Head of caudate nucleus (tissue), 42 donors: ENCODE measurements at regions of chr14 and their contacts with region 1.

Region 1: GRCh38 chr14:24114536-24115450 is at the starts of genes DCAF11 and NRL:
- DNase-seq: peak; percentile 95 to 99 (median 98)

Region 2: GRCh38 chr14:24141097-24141880 is 26.5 kb after region 1 on chr14 and contains the start of gene EMC9:
- intact Hi-C with region 1: loop called (anchors 2 kb)
- DNase-seq: peak; percentile 99 to 100 (median 100)

Region 3: GRCh38 chr14:24155100-24155499 is 40.3 kb after region 1 on chr14:
- intact Hi-C with region 1: no loop called
- DNase-seq: no peak